ENCODE measurements at regions of chr10 and their contacts with region 1.

Region 1: GRCh38 chr10:45580371-45581215 is 92.0 kb downstream of the ZFAND4 start:
- DNase-seq: peak; percentile 45
- H3K4me3 Mint-ChIP-seq: peak overlapping the region; percentile 75
- H3K27ac Mint-ChIP-seq: peak overlapping the region; percentile 86
- H3K4me1 Mint-ChIP-seq: peaks cover 30% of the 10 kb centered on the region
- H3K27me3 Mint-ChIP-seq: no peaks in the 10 kb centered on the region

Region 2: GRCh38 chr10:45470098-45471012 is 110.2 kb before region 1 on chr10:
- CTCF ChIA-PET with region 1: interaction called, 8 read pairs
- POLR2A ChIA-PET with region 1: interaction called, 3 read pairs
- intact Hi-C with region 1: loop called (anchors 1 kb)
- DNase-seq: peak; percentile 58
- H3K4me3 Mint-ChIP-seq: peak overlapping the region; percentile 6
- H3K27ac Mint-ChIP-seq: peak overlapping the region; percentile 72
- H3K4me1 Mint-ChIP-seq: peaks cover 22% of the 10 kb centered on the region
- H3K27me3 Mint-ChIP-seq: no peaks in the 10 kb centered on the region

Region 3: GRCh38 chr10:45594276-45595106 is 13.9 kb after region 1 on chr10:
- CTCF ChIA-PET with region 1: no interaction called
- POLR2A ChIA-PET with region 1: no interaction called
- intact Hi-C with region 1: loop called (anchors 1 kb)
- DNase-seq: peak; percentile 93
- H3K4me3 Mint-ChIP-seq: peak overlapping the region; percentile 80
- H3K27ac Mint-ChIP-seq: peak overlapping the region; percentile 57
- H3K4me1 Mint-ChIP-seq: peaks cover 25% of the 10 kb centered on the region
- H3K27me3 Mint-ChIP-seq: peaks cover 1% of the 10 kb centered on the region

Region 4: GRCh38 chr10:45672181-45673073 is 91.8 kb after region 1 on chr10 and contains the start of gene ZFAND4:
- CTCF ChIA-PET with region 1: interaction called, 5 read pairs
- POLR2A ChIA-PET with region 1: interaction called, 8 read pairs
- intact Hi-C with region 1: loop called (anchors 1 kb)
- DNase-seq: peak; percentile 96
- H3K4me3 Mint-ChIP-seq: peak within 1 kb of the TSS; percentile 88
- H3K27ac Mint-ChIP-seq: peak within 1 kb of the TSS; percentile 62
- H3K4me1 Mint-ChIP-seq: peaks cover 35% of the 10 kb centered on the region
- H3K27me3 Mint-ChIP-seq: no peaks in the 10 kb centered on the region
- total RNA-seq, gene ZFAND4: 9.6 to 11.9 TPM

Measured in activated CD4-positive, alpha-beta memory T cell treated with anti-CD3 and anti-CD28 coated beads for 36 hours (primary cell).